AG04449 (cell line): ENCODE measurements at regions of chr15 and their contacts with region 1.

Region 1: DNA sequence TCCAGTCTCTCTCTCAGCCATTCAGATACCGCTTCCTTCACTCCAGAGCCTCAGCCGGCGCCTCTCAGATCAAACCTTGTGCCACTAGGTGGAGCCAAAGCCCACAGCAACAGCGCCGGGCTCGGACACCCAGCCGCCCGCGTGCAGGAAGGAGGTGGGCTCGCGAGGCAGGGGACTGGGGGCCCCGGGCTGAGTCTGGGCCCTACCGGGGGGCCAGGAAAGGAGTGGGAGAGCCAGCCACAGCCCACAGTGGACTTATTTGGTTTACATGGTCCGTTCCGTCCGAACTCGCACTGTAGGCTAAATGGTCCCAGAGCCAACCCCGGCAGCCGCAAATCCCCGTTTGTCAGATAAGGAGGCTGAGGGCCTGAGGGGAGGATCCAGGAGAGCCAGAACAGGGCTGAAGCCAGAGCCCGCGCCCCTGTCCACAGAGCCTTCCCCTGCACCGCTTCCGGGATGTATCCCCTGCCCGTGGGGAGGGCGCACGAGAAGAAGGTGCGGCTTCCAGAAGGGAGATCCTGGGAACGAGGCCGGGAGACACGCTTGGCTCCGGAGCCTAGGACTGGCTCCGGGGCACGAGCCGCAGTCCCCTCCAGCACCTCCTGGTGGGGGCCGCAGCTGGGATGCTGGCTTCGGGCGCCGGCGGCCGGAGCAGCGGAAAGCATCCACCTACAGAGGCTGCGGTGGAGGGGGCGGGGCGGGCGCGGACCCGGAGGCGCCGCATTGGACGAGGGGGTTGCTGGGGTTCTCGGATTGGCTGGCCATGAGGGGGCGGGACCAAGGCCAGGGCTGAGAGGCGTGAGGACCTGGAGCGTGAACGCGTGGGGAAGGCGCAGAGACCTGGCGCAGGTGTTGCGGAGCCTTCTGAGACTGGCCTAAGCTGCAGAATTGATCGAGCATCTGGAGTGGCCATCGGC is 6.5 kb upstream of the CYP11A1 start:
- DNase-seq: no peak
- H3K4me3 ChIP-seq: peak overlapping the region; percentile 75
- CTCF ChIP-seq: peak; percentile 93

Region 2: GRCh38 chr15:74295800-74296199 is 78.2 kb before region 1 on chr15:
- CTCF ChIA-PET with region 1: no interaction called
- POLR2A ChIA-PET with region 1: no interaction called
- DNase-seq: no peak
- H3K4me3 ChIP-seq: no peak overlapping the region
- CTCF ChIP-seq: no peak

Region 3: GRCh38 chr15:74433592-74434262 is 59.7 kb after region 1 on chr15 and contains the start of gene SEMA7A:
- CTCF ChIA-PET with region 1: interaction called, 1,700 read pairs
- POLR2A ChIA-PET with region 1: no interaction called
- DNase-seq: no peak
- H3K4me3 ChIP-seq: peak within 1 kb of the TSS; percentile 76
- CTCF ChIP-seq: peak; percentile 0

Region 4: DNA sequence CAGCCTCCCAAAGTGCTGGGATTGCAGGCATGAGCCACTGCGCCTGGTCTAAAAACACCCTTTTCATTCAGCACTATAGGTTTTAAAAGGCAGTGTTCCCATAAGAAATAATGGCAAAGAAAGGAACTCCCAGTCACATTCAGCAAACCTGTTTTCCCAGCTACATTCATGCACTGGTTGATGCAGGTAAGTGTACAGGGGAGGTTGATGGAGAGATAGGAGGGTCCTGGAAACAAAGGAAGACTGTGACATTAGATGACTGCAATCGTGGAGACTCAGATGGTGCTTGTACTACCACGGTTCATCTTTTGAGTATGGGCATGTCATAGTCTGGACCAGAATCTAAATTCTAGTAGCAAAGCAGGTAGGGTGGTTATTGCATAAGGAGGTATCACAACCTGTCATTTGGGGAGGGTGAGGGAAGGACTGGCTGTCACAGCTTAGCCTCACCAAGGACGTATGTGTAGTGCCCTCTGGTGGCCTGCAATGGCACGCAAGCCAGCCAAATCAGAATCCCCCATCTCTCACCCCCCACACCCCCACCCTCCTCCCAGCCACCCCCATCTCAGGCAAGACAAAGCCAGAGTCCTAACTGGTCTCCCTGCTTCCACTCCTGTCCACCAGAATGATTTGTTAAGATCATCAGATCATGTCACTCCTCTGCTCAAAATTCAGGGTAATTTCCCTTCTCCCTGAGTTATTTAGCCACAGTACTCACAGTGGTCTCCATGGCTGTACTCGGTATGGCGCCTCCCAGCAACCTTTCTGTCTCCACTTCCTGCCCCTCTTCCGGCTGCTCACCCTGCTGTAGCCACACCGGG is 115.7 kb after region 1 on chr15:
- CTCF ChIA-PET with region 1: interaction called, 161 read pairs
- POLR2A ChIA-PET with region 1: no interaction called
- DNase-seq: no peak
- H3K4me3 ChIP-seq: no peak overlapping the region
- CTCF ChIP-seq: peak; percentile 82

Region 5: GRCh38 chr15:74615508-74616365 is 241.7 kb after region 1 on chr15 and contains the start of gene CLK3:
- CTCF ChIA-PET with region 1: interaction called, 141 read pairs
- POLR2A ChIA-PET with region 1: no interaction called
- DNase-seq: peak; percentile 41
- H3K4me3 ChIP-seq: peak within 1 kb of the TSS; percentile 97
- CTCF ChIP-seq: no peak

Region 6: DNA sequence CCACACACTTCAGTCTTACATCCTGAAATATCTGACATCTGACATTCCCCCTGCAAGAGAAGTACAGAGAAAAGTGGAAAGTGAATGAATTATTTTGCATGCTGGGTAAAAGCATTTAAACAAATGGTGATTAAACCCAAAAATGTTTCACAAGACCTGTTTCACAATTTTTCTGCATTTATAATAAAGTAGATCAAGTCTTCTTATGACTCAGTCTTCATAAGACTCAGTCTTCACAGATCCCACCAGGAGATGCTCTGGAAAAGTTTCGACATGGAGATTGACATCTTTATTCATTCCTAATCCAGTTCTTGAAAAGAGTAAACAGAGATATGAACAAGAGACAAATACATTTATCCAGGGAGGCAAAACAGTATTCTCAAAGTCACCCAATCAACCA is 335.0 kb after region 1 on chr15:
- CTCF ChIA-PET with region 1: no interaction called
- POLR2A ChIA-PET with region 1: no interaction called
- DNase-seq: no peak
- H3K4me3 ChIP-seq: no peak overlapping the region
- CTCF ChIP-seq: no peak

Region 7: DNA sequence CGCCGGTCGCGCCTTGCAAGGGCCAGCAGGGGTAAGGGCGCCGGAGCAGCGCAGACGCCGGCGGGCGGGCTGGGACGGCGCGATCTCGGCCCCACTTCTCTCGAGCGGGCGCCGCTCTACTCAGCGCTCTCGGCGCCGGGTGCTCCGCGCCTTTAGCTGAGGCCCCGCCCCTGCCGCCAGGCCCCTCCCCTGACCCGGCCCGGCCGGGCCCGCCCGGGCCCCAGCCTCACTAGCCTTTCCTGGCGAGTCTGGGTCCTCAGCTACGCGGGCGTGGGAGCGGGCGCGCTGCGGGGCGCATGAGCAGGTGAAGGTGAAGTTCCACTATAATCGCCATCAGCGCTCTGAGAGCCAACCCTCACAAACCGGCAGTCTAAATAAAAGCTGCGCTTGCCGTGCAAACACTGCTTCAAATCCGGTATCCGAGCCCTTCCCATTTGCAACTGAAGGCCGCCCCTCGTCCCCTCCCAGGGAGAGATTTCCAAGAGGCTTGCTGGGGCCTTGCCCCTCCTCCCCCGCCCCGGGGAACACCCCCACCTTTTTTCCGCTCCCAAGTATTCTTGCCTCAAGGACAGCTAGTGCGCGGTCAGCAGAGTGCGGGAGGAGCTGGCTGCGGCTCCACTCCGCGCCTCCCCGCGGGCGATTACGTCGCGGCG is 582.8 kb after region 1 on chr15 and contains the start of gene RPP25:
- CTCF ChIA-PET with region 1: interaction called, 10 read pairs
- POLR2A ChIA-PET with region 1: no interaction called
- DNase-seq: no peak
- H3K4me3 ChIP-seq: peak within 1 kb of the TSS; percentile 56
- CTCF ChIP-seq: no peak